Activated B cell treated with CpG ODN at 0.5 μM for 24 hours (primary cell): ENCODE measurements at regions of chr7 and their contacts with region 1.

Region 1: DNA sequence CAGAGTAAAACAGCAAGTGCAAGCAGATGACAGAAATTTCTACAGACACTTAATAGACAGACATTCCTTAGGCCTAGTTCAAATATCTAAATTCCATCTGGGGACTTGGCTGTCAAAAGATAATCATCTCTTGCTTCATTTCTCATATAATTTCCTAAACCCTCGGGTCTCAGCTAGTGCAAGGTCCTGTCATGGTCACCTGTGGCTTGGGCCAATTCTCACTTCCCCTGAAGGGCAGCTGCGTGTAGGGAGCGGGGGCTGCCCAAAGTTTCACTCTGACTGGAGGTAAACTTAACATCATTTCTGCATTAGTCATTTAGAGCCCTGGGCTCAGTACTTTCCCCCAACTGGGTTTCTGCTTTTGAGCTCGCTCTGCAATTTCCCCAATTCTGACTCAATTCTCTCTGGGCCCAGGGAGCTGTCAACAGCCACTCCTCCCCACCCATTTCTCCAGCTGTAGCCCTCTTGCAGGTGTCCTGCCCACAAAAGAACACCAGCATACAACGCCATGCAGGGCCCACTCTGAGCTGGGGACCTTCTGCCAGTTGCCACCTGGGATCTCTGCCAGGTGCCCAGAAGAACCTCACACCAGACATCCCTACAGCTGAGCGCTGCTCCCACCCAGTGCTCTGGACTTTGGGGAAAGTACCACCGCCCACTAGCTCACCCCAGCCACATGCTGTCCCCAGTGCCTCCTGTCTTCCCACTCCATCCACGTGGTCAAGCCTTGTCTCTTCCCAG is 38.0 kb downstream of the VOPP1 start:
- DNase-seq: peak; percentile 73
- ATAC-seq: peak; percentile 71
- H3K4me3 Mint-ChIP-seq: peak overlapping the region; percentile 85
- H3K27ac Mint-ChIP-seq: peak overlapping the region; percentile 98
- H3K4me1 Mint-ChIP-seq: peaks cover 99% of the 10 kb centered on the region
- H3K27me3 Mint-ChIP-seq: no peaks in the 10 kb centered on the region
- CTCF ChIP-seq: no peak

Region 2: DNA sequence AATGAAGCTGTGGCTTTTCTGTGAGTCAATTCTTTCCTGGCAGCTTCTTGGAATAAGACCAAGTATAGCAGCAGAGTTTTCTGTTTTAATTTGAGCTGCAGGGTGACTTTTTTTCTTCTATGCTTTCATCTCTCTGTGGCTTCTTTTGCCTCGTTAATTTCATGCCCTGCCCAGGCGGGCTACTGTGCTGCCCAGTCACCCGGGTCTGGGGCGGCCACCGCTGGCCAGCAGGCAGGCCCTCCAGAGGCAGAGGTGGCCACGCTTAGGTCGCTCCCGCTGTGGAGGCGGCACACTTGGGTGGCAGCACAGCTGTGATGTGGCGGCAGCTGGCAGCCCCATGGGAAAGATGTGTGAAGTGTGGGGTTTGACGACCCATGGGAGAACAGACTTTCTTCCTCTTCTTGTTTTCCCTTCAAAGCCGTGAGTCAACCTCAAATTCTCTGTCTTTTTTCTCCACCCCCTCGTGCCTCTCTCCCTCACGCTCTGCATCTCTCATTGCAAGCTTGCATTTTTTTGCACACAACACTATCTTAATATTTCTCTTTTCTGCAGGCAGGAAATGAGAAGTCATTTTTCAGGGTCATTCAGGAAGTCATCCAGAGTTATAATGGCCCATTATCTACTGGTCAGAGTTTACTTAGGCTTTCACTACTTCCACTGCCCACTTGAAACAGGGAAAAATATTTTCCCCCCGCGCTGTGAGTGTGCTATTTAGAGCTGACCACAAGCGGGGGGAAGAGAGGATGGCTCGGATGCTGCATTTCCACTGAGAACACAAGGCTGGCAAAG is 447.7 kb before region 1 on chr7:
- CTCF ChIA-PET with region 1: no interaction called
- POLR2A ChIA-PET with region 1: interaction called, 6 read pairs
- intact Hi-C with region 1: loop called (anchors 5 kb)
- DNase-seq: peak; percentile 47
- ATAC-seq: peak; percentile 98
- H3K4me3 Mint-ChIP-seq: peak overlapping the region; percentile 29
- H3K27ac Mint-ChIP-seq: no peak overlapping the region
- H3K4me1 Mint-ChIP-seq: peaks cover 24% of the 10 kb centered on the region
- H3K27me3 Mint-ChIP-seq: peaks cover 25% of the 10 kb centered on the region
- CTCF ChIP-seq: no peak

Region 3: DNA sequence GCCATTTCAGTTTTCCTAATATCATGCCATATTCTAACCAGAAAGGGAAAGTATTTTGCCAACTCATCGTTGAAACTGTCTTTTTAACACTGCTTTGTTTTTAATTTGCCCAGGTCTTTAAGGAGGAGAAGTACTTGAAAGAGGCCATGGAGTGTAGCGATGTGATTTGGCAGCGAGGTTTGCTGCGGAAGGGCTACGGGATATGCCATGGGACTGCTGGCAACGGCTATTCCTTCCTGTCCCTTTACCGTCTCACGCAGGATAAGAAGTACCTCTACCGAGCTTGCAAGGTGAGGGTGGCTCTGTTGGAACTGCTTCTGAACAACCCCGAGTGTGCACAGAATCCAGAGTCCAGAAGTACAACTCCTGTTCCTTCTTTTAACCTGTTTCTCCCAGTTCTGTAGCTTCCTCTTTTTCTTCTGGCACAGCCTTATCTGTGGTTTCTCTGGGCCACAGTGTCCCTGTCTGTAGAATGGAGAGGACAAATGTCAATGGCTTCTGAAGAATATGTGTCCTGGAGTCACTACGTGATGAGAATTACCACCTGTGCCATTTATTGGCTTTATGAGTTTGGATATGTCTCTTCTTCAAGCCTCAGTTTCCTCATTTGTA is 109.1 kb before region 1 on chr7:
- CTCF ChIA-PET with region 1: no interaction called
- POLR2A ChIA-PET with region 1: no interaction called
- intact Hi-C with region 1: no loop called
- DNase-seq: no peak
- ATAC-seq: no peak
- H3K4me3 Mint-ChIP-seq: no peak overlapping the region
- H3K27ac Mint-ChIP-seq: no peak overlapping the region
- H3K4me1 Mint-ChIP-seq: no peaks in the 10 kb centered on the region
- H3K27me3 Mint-ChIP-seq: no peaks in the 10 kb centered on the region
- CTCF ChIP-seq: no peak

Region 4: DNA sequence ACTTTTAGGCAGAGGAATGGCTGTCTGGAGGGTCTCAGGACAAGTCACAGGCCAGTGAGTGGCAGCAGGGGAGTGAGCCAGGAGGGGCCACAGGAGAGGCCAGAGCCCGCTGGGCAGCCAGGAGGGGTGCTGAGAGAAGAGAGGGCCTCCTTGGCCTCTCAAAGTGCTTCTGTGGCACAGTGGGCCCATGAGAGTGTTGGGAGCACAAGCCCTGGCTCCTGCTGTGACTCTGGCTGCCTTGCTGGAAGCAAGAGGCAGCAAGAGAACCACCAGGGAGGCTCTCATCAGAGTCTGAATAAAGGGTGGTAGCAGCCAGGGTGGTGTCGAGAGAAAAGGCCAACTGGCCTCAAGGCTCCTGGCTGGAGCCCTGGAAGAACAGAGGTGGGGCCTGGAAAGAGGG is 53.2 kb before region 1 on chr7:
- CTCF ChIA-PET with region 1: no interaction called
- POLR2A ChIA-PET with region 1: no interaction called
- intact Hi-C with region 1: no loop called
- DNase-seq: no peak
- ATAC-seq: no peak
- H3K4me3 Mint-ChIP-seq: no peak overlapping the region
- H3K27ac Mint-ChIP-seq: peak overlapping the region; percentile 5
- H3K4me1 Mint-ChIP-seq: peaks cover 29% of the 10 kb centered on the region
- H3K27me3 Mint-ChIP-seq: no peaks in the 10 kb centered on the region
- CTCF ChIP-seq: no peak

Region 5: DNA sequence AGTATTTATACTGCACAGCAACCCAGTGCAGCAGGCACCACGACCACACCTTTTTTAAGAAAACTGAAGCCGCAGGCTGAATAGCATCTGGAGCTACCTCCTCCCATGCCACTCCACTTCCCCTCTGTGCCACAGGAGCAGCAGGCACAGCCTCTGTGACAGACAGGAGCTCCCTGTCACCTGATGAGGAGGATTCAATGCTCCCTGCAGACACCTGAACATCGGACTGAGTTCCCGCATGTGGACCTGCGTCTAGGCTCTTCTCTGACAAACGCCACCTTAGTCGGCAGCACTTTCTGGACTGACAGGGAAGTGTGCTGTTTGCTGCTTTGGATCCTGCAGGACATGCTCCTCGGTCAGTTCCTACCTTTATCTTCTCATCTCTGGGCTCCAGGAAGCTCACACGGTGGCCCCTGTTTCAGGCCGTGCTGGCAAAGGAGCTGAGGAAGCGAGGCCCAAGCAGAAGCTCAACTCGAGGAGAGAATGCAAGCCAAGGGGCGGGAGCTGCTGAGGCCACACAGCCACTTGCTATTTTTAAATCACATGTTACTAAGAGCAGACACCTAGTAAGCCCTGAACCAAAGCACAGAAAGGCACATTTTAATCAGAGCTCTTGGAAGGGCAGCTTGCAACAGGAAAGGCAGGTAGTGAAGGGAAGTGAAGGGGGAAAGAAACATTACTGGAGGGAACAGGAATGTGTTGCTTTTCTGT is 18.6 kb before region 1 on chr7:
- CTCF ChIA-PET with region 1: interaction called, 7 read pairs
- POLR2A ChIA-PET with region 1: interaction called, 357 read pairs
- intact Hi-C with region 1: loop called (anchors 1 kb)
- DNase-seq: no peak
- ATAC-seq: peak; percentile 21
- H3K4me3 Mint-ChIP-seq: peak overlapping the region; percentile 66
- H3K27ac Mint-ChIP-seq: peak overlapping the region; percentile 85
- H3K4me1 Mint-ChIP-seq: peaks cover 95% of the 10 kb centered on the region
- H3K27me3 Mint-ChIP-seq: no peaks in the 10 kb centered on the region
- CTCF ChIP-seq: no peak

Region 6: DNA sequence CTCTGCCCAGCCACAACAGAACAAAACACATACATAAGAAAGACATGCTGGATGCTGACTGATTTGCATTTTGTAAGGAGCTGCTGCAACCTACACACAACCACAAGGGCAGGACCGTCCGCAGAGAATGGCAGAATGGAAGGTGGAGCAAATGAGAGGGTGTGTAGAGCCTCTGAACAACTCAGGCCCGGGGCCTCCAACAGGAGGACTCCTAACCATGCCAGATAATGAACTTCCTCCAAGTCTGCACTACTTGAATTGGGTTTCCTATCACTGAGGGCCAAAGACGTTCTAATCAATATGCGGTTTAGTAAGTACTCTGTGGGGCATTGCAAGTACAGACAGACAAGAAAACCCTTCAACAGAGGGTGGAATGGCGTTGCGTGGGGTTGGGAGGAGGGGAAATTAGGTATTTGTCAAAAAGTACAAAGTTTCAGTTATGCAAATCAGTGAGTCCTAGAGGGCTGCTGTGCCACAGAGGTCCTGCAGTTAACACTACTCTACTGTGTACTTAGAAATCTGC is 23.4 kb after region 1 on chr7:
- CTCF ChIA-PET with region 1: interaction called, 7 read pairs
- POLR2A ChIA-PET with region 1: interaction called, 90 read pairs
- intact Hi-C with region 1: loop called (anchors 1 kb)
- DNase-seq: peak; percentile 39
- ATAC-seq: peak; percentile 83
- H3K4me3 Mint-ChIP-seq: peak overlapping the region; percentile 79
- H3K27ac Mint-ChIP-seq: peak overlapping the region; percentile 88
- H3K4me1 Mint-ChIP-seq: peaks cover 97% of the 10 kb centered on the region
- H3K27me3 Mint-ChIP-seq: no peaks in the 10 kb centered on the region
- CTCF ChIP-seq: no peak

Region 7: DNA sequence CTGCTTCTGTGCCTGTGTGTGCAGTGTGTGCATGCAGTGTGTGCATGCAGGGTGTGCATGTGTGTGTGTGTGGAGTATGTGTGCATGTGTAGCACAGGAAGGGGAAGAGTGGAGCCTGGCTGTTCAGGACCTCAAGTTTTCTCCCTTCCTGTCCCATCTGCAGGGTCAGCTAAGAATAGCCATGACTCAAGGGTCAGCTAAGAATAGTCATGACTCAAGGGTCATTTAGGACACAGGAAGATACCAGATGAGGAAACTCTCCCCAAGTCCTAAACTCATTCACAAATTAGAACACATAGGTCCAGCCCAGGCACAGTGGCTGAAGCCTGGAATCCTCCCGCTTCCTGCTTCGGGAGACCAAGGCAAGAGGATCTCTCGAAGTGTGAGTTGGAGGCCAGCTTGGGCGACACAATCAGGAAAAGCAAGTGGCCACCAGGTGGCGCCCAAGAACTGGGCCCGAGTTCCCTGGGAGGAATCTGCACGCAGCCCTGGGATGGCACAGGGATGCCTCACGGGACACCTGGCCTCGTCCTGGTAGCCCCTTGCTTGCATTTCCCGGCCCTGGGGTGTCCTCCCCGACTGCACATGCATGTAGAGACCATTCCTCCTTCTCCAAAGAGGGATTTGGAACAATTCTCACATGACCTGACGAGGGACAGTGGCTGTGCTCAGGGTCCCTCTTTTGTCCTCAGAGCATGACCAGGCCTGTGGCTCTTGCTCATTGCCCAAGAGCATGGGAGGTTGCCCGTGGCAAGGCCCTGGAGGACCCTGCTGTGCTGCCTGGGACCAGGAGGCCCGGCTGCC is 59.4 kb after region 1 on chr7:
- CTCF ChIA-PET with region 1: interaction called, 10 read pairs
- POLR2A ChIA-PET with region 1: interaction called, 16 read pairs
- intact Hi-C with region 1: loop called (anchors 1 kb)
- DNase-seq: peak; percentile 58
- ATAC-seq: no peak
- H3K4me3 Mint-ChIP-seq: no peak overlapping the region
- H3K27ac Mint-ChIP-seq: no peak overlapping the region
- H3K4me1 Mint-ChIP-seq: peaks cover 41% of the 10 kb centered on the region
- H3K27me3 Mint-ChIP-seq: no peaks in the 10 kb centered on the region
- CTCF ChIP-seq: no peak

Region 8: GRCh38 chr7:55827577-55827976 is 293.2 kb after region 1 on chr7:
- CTCF ChIA-PET with region 1: no interaction called
- POLR2A ChIA-PET with region 1: no interaction called
- intact Hi-C with region 1: no loop called
- DNase-seq: no peak
- ATAC-seq: no peak
- H3K4me3 Mint-ChIP-seq: no peak overlapping the region
- H3K27ac Mint-ChIP-seq: no peak overlapping the region
- H3K4me1 Mint-ChIP-seq: no peaks in the 10 kb centered on the region
- H3K27me3 Mint-ChIP-seq: no peaks in the 10 kb centered on the region
- CTCF ChIP-seq: no peak

Region 9: DNA sequence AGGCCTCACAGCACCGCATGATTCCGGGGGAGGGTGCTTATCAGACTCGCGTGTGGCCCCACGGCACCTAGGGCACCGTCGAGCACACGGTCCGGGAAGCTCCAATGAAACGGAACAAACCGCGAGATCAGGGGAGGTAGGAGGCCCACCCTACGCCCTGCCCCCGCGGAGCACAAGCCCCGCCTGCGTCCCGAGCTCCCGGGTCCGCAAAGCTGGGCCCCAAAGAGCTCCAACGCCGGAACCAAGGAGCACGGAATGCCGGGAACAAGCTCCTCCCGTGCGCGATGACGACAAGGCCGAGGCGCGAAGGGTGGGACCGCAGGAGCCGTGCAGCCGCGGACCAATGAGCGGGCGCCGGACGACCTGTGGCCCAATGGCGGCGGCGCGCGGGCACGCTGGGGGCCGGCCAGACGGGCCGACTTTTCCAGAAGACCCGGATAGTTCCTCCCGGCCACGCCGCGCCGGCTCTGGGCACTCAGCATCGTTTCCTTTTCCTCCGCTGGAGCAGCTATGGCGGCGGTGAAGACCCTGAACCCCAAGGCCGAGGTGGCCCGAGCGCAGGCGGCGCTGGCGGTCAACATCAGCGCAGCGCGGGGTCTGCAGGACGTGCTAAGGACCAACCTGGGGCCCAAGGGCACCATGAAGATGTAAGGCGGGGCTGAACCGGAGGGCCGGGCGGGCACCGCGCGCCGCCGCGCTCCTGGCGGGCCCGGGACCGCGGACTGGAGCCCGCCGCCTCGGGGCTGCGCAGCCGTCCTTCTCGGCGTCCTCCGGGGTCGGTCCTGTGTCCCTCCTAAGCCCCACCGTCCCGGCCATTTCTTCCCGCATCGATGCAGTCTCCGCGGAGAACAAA is 517.2 kb after region 1 on chr7 and contains the starts of genes CCT6A and PSPH:
- CTCF ChIA-PET with region 1: no interaction called
- POLR2A ChIA-PET with region 1: interaction called, 5 read pairs
- intact Hi-C with region 1: loop called (anchors 1 kb)
- DNase-seq: peak; percentile 88
- ATAC-seq: peak; percentile 90
- H3K4me3 Mint-ChIP-seq: peak within 1 kb of the TSS; percentile 88
- H3K27ac Mint-ChIP-seq: peak within 1 kb of the TSS; percentile 88
- H3K4me1 Mint-ChIP-seq: peaks cover 27% of the 10 kb centered on the region
- H3K27me3 Mint-ChIP-seq: no peaks in the 10 kb centered on the region
- CTCF ChIP-seq: no peak
- total RNA-seq, gene CCT6A: 149 and 158 TPM in 2 replicates
- total RNA-seq, gene PSPH: 7.9 and 9.0 TPM in 2 replicates